Activated T-helper 1 cell treated with anti-CD3 and anti-CD28 coated beads, Interleukin-12 subunit alpha, Interleukin-12 subunit beta, Interleukin-2, Interleukin-4 antibody, amounts not matched to agents 30 ng/mL and 10 ng/mL and 1 ng/mL, durations not matched to agents 14 hours and 24 hours and 36 hours (primary cell): ENCODE measurements at regions of chr11 and their contacts with region 1.

Region 1: GRCh38 chr11:57530596-57531507 is at the start of gene TIMM10:
- DNase-seq: peak; percentile 92
- H3K4me3 Mint-ChIP-seq: peak within 1 kb of the TSS; percentile 87
- H3K27ac Mint-ChIP-seq: peak within 1 kb of the TSS; percentile 87
- H3K4me1 Mint-ChIP-seq: peaks cover 32% of the 10 kb centered on the region
- H3K27me3 Mint-ChIP-seq: no peaks in the 10 kb centered on the region
- total RNA-seq, gene TIMM10: 98.2 and 99.6 TPM in 2 replicates

Region 2: DNA sequence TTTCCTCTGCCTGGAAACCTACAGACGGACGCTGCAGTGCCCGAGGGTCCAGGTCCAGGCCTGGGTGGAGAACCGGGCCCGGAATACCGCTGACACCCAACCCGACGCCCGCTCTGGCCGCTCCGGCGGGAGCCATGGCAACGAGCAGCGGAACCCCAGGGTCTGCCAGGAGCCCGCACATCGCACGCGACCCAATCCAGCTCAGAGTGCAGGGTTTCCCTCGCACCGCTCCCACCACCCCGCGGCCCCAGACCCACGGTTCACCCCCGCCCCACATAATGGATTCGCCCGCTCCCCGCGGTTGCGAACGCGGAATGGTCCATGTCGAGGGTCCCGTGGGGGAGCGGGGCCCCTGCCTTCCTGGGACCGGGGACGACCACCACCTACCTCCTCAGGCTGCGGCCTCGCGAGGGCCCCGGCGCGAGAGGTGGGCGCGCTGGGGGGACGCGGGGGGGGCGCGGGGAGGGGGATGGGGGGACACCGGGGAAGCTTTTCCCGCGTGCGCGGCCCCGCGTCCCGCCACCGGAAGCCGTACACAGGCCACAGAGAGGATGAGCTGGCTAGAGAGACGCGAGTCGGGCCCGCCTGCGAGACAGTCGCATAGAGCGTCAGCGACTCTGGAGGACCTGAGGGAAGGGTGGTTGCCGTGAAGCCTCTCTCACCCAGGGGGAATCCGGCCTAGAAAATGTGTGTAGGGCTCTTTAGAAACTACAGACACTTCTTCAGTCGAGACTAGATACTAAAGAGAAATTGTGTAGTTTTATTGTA is 195.3 kb before region 1 on chr11 and contains the start of gene SSRP1:
- intact Hi-C with region 1: loop called (anchors 1 kb)
- DNase-seq: peak; percentile 81
- H3K4me3 Mint-ChIP-seq: peak within 1 kb of the TSS; percentile 92
- H3K27ac Mint-ChIP-seq: peak within 1 kb of the TSS; percentile 99
- H3K4me1 Mint-ChIP-seq: peaks cover 39% of the 10 kb centered on the region
- H3K27me3 Mint-ChIP-seq: peaks cover 1% of the 10 kb centered on the region
- total RNA-seq, gene SSRP1: 235 and 239 TPM in 2 replicates

Region 3: GRCh38 chr11:57456960-57457642 is 73.8 kb before region 1 on chr11:
- intact Hi-C with region 1: loop called (anchors 1 kb)
- DNase-seq: peak; percentile 65
- H3K4me3 Mint-ChIP-seq: peak overlapping the region; percentile 72
- H3K27ac Mint-ChIP-seq: no peak overlapping the region
- H3K4me1 Mint-ChIP-seq: peaks cover 36% of the 10 kb centered on the region
- H3K27me3 Mint-ChIP-seq: peaks cover 53% of the 10 kb centered on the region

Region 4: GRCh38 chr11:57556061-57556460 is 25.2 kb after region 1 on chr11:
- intact Hi-C with region 1: no loop called
- DNase-seq: no peak
- H3K4me3 Mint-ChIP-seq: no peak overlapping the region
- H3K27ac Mint-ChIP-seq: no peak overlapping the region
- H3K4me1 Mint-ChIP-seq: peaks cover 8% of the 10 kb centered on the region
- H3K27me3 Mint-ChIP-seq: peaks cover 1% of the 10 kb centered on the region

Region 5: DNA sequence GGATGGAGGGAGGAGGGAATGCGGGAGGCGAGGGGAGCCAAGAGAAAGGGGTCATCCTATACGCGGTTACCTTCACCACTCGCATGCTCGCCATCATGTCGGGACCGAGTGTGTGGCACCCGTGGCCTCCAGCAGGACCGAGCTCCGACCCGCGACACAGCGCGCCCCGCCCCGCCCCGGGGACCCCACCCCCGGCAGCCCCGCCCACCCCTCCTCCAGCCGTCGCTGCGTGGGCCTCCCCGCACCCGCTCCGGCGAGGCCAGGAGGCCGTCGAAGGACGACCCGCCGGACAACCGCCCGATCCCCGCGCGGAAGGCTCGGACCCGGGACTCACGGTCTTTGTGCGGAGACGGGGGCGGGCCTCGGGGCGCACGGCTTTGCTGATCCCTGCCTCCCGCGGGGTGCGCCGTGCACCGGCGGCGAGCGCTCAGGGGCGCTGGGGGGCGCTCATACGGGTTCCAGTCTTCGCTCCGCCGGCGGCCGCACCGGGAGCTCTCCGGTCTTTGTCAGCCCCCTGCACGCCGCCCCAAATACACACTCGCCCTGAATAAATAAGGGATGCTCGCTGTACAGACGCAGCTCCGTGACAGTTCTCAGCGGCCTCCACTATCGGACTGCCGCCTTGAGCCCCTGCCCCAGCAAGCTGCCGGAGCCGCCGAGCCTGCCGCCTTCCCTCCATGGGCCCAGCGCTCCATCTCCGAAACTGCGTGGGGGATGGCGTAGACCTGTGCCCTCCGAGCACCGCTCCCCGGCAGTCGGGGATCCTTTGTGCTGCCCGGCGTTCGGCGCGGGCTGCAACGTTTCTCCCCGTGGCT is 36.9 kb after region 1 on chr11 and contains the start of gene UBE2L6:
- intact Hi-C with region 1: loop called (anchors 1 kb)
- DNase-seq: peak; percentile 53
- H3K4me3 Mint-ChIP-seq: peak within 1 kb of the TSS; percentile 99
- H3K27ac Mint-ChIP-seq: peak within 1 kb of the TSS; percentile 97
- H3K4me1 Mint-ChIP-seq: peaks cover 41% of the 10 kb centered on the region
- H3K27me3 Mint-ChIP-seq: no peaks in the 10 kb centered on the region
- total RNA-seq, gene UBE2L6: 155 and 163 TPM in 2 replicates

Region 6: DNA sequence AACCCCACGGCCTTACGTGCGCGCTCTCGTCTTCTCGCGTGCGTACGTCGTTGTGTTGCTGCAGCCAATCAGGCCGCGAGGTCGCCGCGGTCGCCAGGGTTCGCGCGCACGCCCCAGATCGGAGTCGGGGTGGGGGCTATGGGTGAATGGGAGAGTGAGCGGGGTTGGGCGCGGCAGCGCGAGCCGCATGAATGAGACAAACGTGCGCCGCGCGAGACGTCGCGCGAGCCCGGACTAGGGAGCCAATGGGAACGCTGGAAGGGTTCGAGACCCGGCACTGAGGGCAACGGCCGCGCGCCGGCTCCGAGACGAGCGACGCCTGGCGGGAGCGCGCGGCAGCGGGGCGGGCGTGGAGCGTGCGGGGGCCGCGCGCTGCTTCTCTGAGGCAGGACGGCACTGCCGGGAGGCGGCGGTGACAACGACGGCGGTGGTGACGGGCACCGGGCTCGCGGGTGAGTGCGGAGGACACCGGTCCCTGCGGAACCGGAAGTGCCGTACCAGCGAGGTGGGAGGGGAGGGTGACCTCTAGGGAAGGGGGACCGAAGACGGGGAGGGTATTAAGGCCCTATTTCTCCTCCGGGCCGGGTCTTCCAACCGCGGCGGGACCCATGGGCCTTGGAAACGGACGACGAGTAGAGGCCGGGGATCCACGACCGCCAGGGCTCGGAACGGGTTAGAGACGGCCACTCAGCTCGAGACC is 137.0 kb after region 1 on chr11 and contains the start of gene ZDHHC5:
- intact Hi-C with region 1: loop called (anchors 1 kb)
- DNase-seq: peak; percentile 99
- H3K4me3 Mint-ChIP-seq: peak within 1 kb of the TSS; percentile 99
- H3K27ac Mint-ChIP-seq: peak within 1 kb of the TSS; percentile 97
- H3K4me1 Mint-ChIP-seq: peaks cover 31% of the 10 kb centered on the region
- H3K27me3 Mint-ChIP-seq: no peaks in the 10 kb centered on the region
- total RNA-seq, gene ZDHHC5: 78.4 and 79.1 TPM in 2 replicates

Region 7: DNA sequence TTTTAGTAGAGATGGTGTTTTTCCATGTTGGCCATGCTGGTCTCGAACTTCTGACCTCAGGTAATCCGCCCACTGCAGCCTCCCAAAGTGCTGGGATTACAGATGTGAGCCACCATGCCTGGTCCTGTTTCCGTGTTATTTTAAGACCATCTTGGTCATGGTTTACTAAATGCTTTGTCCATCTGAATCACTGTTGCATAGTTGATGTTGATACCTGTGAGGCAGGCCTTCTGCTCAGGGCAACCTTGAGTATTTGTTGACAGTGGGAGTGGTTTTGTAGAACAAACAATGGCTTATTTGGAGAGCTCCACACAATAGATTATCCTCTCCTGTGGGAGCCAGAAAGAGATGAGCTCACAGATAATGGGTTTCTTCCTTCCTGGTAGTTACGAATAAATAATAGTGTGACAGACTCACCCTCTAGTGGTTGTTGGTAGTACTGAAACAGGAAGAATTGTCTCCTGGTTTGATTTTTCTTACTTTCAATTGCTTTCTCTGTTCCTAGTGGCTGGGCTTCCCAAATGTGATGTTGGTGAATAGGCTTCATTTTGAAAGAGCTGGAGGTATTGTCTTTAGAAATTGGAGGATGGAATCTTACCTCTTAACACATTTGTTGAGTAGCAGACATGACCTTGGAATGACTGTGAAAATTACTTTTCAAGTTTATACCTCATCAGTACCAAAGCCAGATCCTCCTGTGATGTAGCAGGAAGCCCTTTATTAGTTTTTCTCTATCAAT is 269.8 kb after region 1 on chr11:
- intact Hi-C with region 1: loop called (anchors 1 kb)
- DNase-seq: peak; percentile 13
- H3K4me3 Mint-ChIP-seq: no peak overlapping the region
- H3K27ac Mint-ChIP-seq: peak overlapping the region; percentile 26
- H3K4me1 Mint-ChIP-seq: peaks cover 23% of the 10 kb centered on the region
- H3K27me3 Mint-ChIP-seq: no peaks in the 10 kb centered on the region